Activated naive CD4-positive, alpha-beta T cell treated with anti-CD3 and anti-CD28 coated beads for 36 hours (primary cell): ENCODE measurements at regions of chr6 and their contacts with region 1.

Region 1: DNA sequence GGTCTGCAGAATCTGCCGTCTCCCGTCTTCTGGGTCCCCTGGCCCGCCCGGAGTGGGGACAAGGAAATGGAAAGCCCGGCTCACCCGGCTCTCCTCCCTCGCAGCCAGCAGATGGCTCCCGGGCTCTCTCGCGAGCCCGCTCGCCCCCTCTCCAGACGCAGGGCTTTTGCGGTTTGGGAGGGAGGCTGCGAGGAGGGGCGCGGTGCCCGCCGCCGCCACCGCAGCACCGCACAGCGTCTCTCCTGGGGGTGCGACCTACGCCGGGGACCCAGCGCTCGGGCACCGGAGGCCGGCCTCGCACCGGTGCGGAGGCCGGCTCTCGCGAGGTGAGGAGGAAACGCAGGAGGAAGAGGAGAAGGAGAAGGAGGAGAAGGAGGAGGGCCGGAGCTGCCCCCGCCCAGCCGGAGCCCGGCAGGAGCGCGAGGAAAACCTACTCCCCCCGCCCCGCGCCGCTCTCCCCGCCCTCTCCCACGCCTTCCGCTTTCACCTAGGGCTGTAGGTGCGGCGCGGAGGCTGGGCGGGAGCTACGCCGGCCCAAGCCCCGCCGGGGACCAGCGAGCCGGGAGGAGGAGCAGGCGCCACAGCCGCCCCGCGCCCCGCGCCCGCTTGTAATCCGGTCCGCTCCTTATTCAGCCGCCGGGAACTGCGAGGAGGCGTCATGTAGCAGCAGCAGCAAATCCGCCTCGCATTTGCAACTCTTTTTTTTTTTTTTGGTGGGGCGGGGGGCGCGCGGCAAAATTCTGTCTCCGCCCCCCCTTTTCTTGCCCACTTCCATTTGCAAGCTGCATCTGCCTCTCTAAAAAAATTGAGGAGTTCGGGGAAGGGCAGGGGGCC is at the start of gene CARMIL1:
- DNase-seq: peak; percentile 76
- H3K4me3 Mint-ChIP-seq: peak within 1 kb of the TSS; percentile 83
- H3K27ac Mint-ChIP-seq: peak within 1 kb of the TSS; percentile 60
- H3K4me1 Mint-ChIP-seq: peaks cover 29% of the 10 kb centered on the region
- H3K27me3 Mint-ChIP-seq: no peaks in the 10 kb centered on the region
- total RNA-seq, gene CARMIL1: 3.9 to 4.0 TPM

Region 2: GRCh38 chr6:25250878-25251277 is 28.3 kb before region 1 on chr6:
- CTCF ChIA-PET with region 1: no interaction called
- intact Hi-C with region 1: loop called (anchors 1 kb)
- DNase-seq: peak; percentile 76
- H3K4me3 Mint-ChIP-seq: no peak overlapping the region
- H3K27ac Mint-ChIP-seq: peak overlapping the region; percentile 62
- H3K4me1 Mint-ChIP-seq: peaks cover 12% of the 10 kb centered on the region
- H3K27me3 Mint-ChIP-seq: no peaks in the 10 kb centered on the region

Region 3: DNA sequence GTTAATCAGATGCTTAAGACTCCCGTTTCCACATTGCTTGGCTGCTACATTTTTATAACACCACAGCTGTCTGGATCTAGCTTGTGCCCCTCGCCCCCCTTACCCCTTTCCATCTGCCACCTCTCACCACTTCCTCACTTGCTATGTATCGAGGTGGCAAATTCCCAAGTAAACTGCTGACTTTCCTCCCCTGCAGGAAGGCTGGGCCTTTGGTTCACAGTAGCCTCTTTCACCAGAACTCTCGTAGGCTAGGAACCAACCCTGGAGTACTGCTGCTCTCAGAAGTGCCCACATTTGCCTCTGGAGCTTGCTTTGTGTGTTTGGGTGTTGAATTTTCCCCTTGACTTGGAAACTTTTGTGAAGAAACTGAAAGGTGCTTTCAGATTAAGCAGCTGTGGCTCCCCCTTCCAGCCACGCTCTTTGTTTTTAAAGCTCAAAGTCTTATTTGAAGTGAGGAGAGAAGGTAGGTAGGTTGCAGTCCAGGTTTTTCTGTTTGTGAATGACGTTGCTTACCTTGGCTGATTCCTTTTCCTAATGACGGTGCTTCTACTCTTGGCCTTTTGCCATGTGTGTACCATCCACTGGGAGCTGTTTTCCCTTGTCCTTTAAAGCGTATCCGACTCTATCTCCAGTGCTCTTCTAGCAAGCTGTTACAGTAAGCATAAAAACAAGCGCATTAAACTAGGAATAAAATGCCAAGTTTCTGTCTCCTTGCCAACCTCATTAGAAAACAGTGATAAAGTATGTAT is 90.5 kb after region 1 on chr6:
- CTCF ChIA-PET with region 1: interaction called, 18 read pairs
- intact Hi-C with region 1: loop called (anchors 1 kb)
- DNase-seq: peak; percentile 57
- H3K4me3 Mint-ChIP-seq: peak overlapping the region; percentile 51
- H3K27ac Mint-ChIP-seq: peak overlapping the region; percentile 74
- H3K4me1 Mint-ChIP-seq: peaks cover 75% of the 10 kb centered on the region
- H3K27me3 Mint-ChIP-seq: no peaks in the 10 kb centered on the region

Region 4: DNA sequence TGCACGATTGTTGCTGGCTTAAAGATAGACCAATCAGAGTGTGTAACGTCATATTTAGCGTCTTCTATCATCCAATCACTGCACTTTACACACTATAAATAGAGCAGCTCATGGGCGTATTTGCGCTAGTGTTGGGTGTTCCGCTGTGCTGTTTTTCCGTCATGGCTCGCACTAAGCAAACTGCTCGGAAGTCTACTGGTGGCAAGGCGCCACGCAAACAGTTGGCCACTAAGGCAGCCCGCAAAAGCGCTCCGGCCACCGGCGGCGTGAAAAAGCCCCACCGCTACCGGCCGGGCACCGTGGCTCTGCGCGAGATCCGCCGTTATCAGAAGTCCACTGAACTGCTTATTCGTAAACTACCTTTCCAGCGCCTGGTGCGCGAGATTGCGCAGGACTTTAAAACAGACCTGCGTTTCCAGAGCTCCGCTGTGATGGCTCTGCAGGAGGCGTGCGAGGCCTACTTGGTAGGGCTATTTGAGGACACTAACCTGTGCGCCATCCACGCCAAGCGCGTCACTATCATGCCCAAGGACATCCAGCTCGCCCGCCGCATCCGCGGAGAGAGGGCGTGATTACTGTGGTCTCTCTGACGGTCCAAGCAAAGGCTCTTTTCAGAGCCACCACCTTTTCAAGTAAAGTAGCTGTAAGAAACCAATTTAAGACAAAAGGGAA is 741.3 kb after region 1 on chr6:
- CTCF ChIA-PET with region 1: no interaction called
- intact Hi-C with region 1: loop called (anchors 5 kb)
- DNase-seq: peak; percentile 87
- H3K4me3 Mint-ChIP-seq: peak overlapping the region; percentile 96
- H3K27ac Mint-ChIP-seq: peak overlapping the region; percentile 100
- H3K4me1 Mint-ChIP-seq: peaks cover 26% of the 10 kb centered on the region
- H3K27me3 Mint-ChIP-seq: no peaks in the 10 kb centered on the region